Right lobe of liver (tissue), 6 donors: ENCODE measurements at regions of chr9 and their contacts with region 1.

Region 1: DNA sequence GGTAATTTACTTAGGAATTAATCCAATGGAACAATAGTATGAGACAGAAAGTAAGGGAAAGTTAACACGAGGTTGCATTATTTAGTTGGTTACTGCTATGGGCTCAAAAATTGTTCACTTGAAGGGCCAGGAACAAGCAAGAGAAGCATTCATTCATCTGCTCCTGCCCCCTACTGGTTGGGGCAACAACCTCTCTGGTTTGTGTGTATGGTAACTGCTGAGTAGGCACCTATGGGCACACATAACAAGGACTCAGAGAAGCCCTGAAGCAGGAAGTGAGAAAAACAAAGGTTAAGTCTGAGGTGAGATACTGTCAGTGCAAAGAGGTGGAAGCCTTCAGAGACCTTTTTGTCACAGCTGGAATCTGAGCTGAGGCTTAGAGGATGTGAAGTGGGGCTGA is 34.4 kb upstream of the RANBP6 start:
- DNase-seq: no peak
- ATAC-seq: peak; percentile 50 to 68 (median 62)
- H3K4me3 ChIP-seq: no peak overlapping the region
- H3K27ac ChIP-seq: no peak overlapping the region
- H3K4me1 ChIP-seq: no peaks in the 10 kb centered on the region
- H3K27me3 ChIP-seq: no peaks in the 10 kb centered on the region
- CTCF ChIP-seq: peak; percentile 28 to 51 (median 37)
- POLR2A ChIP-seq: no peak

Region 2: GRCh38 chr9:5886114-5886939 is 163.5 kb before region 1 on chr9:
- intact Hi-C with region 1: loop called (anchors 10 kb)
- DNase-seq: peak; percentile 77 to 81 (median 79)
- ATAC-seq: peak; percentile 94 to 99 (median 96)
- H3K4me3 ChIP-seq: no peak overlapping the region
- H3K27ac ChIP-seq: no peak overlapping the region
- H3K4me1 ChIP-seq: no peaks in the 10 kb centered on the region
- H3K27me3 ChIP-seq: no peaks in the 10 kb centered on the region
- CTCF ChIP-seq: peak; percentile 92 to 95 (median 94)
- POLR2A ChIP-seq: no peak

Region 3: DNA sequence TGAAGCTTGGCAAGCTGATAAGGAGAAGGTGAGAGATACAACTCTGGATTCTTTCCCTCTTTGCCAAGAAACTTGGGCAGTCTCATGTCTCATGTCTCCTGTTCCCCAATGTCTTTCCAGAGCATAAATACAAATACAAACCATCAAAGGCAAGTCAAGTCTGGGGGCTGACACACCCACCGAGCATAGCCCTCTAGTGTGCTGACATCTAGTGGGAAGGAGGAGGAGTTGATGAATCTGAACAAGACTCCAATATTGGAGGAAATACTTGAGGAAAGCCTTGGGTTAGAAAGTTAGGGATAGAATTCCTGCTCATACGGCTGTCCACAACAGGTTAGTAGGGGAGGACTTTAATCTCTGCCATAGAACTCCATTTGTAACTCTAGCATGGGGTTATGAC is 150.5 kb before region 1 on chr9:
- intact Hi-C with region 1: loop called in 1 of 2 experiments (anchors 10 kb)
- DNase-seq: no peak
- ATAC-seq: no peak
- H3K4me3 ChIP-seq: no peak overlapping the region
- H3K27ac ChIP-seq: no peak overlapping the region
- H3K4me1 ChIP-seq: peaks cover 0 to 3% (median 0%) of the 10 kb centered on the region in 4 donors
- H3K27me3 ChIP-seq: no peaks in the 10 kb centered on the region
- CTCF ChIP-seq: peak in 1 of 4 donors; percentile 6
- POLR2A ChIP-seq: no peak

Region 4: DNA sequence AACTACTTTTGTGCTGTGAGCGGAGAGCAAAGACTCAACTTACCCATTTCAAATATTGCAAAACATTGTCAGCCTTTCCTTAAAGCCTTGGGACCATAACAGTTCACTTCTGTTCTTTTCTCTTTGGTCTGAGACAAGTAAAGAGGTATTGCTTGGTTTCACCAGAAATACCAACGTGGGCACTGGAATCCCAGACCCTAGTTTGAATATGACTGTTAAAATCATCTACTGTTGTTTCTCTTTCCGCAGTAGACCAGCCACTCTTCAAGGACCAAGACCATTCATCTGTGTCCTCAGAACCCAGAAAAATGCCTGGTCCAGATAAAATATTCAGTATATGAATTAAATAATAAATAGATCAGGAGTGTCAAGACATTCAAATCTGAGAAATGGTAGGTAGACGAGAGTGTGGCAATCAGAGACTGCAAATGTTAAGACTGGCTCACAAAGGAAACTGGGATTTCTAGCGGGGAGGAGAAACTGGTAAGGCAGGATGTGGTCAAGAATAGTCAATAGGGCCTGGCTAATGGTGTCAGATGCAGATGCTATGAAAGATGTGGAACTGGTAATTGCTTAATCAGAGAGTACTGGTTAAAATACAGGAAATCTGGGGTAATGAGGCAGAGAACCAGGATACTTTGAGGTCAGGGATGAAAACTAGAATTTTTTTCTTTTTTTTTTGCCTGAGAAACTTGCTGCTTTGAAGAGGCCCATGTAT is 83.7 kb after region 1 on chr9:
- intact Hi-C with region 1: no loop called
- DNase-seq: no peak
- ATAC-seq: no peak
- H3K4me3 ChIP-seq: no peak overlapping the region
- H3K27ac ChIP-seq: no peak overlapping the region
- H3K4me1 ChIP-seq: no peaks in the 10 kb centered on the region
- H3K27me3 ChIP-seq: no peaks in the 10 kb centered on the region
- CTCF ChIP-seq: no peak
- POLR2A ChIP-seq: no peak